ENCODE measurements at regions of chr1 and their contacts with region 1.

Region 1: GRCh38 chr1:20124456-20125057 is 5.2 kb upstream of the PLA2G2D start:
- DNase-seq: peak; percentile 69 to 80
- H3K4me3 ChIP-seq: no peak overlapping the region
- H3K27ac ChIP-seq: no peak overlapping the region
- H3K4me1 ChIP-seq: peaks cover 13% of the 10 kb centered on the region
- H3K27me3 ChIP-seq: no peaks in the 10 kb centered on the region
- CTCF ChIP-seq: no peak

Region 2: DNA sequence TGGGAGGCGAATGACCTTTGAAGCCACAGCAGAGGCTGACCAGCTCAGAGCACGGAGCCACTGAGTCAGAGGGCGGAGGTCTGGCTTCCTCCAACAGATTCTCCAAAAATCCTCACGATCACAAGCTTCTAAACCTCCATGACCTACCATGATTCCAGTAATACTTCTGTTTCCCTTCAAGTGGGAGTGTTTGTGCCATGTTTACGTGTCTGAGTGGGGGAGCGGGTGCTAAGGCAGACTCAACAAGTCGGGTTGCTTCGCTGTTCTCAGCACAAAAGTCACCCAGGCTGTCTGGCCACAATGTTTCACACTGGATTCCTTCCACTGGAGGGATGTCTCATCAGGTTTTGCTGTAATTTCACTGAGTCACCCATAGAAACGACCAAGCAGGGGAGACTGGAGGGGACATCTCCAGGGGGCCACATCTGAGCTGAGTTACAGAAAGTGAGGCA is 726.2 kb before region 1 on chr1:
- CTCF ChIA-PET with region 1: no interaction called
- POLR2A ChIA-PET with region 1: no interaction called
- intact Hi-C with region 1: no loop called
- DNase-seq: peak in 1 of 2 experiments; percentile 27
- H3K4me3 ChIP-seq: no peak overlapping the region
- H3K27ac ChIP-seq: no peak overlapping the region
- H3K4me1 ChIP-seq: no peaks in the 10 kb centered on the region
- H3K27me3 ChIP-seq: no peaks in the 10 kb centered on the region
- CTCF ChIP-seq: no peak

Region 3: GRCh38 chr1:20028125-20028524 is 96.4 kb before region 1 on chr1:
- CTCF ChIA-PET with region 1: interaction called, 15 read pairs
- POLR2A ChIA-PET with region 1: no interaction called
- intact Hi-C with region 1: no loop called
- DNase-seq: no peak
- H3K4me3 ChIP-seq: no peak overlapping the region
- H3K27ac ChIP-seq: no peak overlapping the region
- H3K4me1 ChIP-seq: no peaks in the 10 kb centered on the region
- H3K27me3 ChIP-seq: no peaks in the 10 kb centered on the region
- CTCF ChIP-seq: no peak

Region 4: GRCh38 chr1:20212685-20213331 is 88.3 kb after region 1 on chr1:
- CTCF ChIA-PET with region 1: no interaction called
- POLR2A ChIA-PET with region 1: no interaction called
- intact Hi-C with region 1: no loop called
- DNase-seq: peak; percentile 90 to 92
- H3K4me3 ChIP-seq: peak overlapping the region; percentile 47; the same call in 1 of the 2 replicates
- H3K27ac ChIP-seq: peak overlapping the region; percentile 99
- H3K4me1 ChIP-seq: peaks cover 58% of the 10 kb centered on the region
- H3K27me3 ChIP-seq: no peaks in the 10 kb centered on the region
- CTCF ChIP-seq: peak; percentile 91

Measured in PC-9 (cell line).